Posterior vena cava (tissue), 2 donors: ENCODE measurements at regions of chr20 and their contacts with region 1.

Region 1: GRCh38 chr20:39025883-39026282 is 63.7 kb downstream of the DHX35 start:
- DNase-seq: no peak

Region 2: GRCh38 chr20:38990728-38991127 is 35.2 kb before region 1 on chr20:
- intact Hi-C with region 1: loop called in 1 of 2 experiments (anchors 5 kb)
- DNase-seq: no peak